Activated T-helper 1 cell treated with anti-CD3 and anti-CD28 coated beads, Interleukin-12 subunit alpha, Interleukin-12 subunit beta, Interleukin-2, Interleukin-4 antibody, amounts not matched to agents 30 ng/mL and 10 ng/mL and 1 ng/mL, durations not matched to agents 14 hours and 24 hours and 36 hours (primary cell): ENCODE measurements at regions of chr4 and their contacts with region 1.

Region 1: DNA sequence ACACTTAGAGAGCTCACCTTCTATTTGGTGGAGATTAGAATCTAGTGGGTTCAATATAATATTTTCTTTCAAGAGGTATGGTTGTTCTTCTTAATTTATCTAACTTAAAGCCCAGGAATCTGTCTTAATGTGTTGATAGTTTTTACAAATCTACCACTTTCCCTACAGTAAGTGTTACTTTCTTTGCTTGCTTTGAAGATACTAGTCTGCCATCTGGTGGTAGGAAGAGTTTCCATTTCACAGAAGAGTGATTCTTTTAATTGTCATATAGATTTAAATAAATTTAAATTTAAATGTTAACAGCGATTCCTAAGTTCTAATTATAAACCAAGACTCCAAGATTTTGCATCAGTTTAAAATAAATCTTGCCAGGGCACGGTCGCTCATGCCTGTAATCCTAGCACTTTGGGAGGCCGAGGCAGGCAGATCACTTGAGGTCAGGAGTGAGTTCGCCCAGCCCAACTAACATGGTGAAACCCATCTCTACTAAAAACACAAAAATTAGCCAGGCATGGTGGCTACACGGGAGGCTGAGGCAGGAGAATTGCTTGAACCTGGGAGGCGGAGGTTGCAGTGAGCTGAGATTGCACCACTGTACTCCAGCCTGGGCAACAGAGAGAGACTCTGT is 43.5 kb downstream of the NUDT9 start:
- DNase-seq: no peak
- H3K4me3 Mint-ChIP-seq: no peak overlapping the region
- H3K27ac Mint-ChIP-seq: no peak overlapping the region
- H3K4me1 Mint-ChIP-seq: no peaks in the 10 kb centered on the region
- H3K27me3 Mint-ChIP-seq: no peaks in the 10 kb centered on the region

Region 2: GRCh38 chr4:87235020-87235671 is 230.7 kb before region 1 on chr4:
- intact Hi-C with region 1: loop called (anchors 5 kb)
- DNase-seq: no peak
- H3K4me3 Mint-ChIP-seq: no peak overlapping the region
- H3K27ac Mint-ChIP-seq: no peak overlapping the region
- H3K4me1 Mint-ChIP-seq: peaks cover 7% of the 10 kb centered on the region
- H3K27me3 Mint-ChIP-seq: peaks cover 14% of the 10 kb centered on the region

Region 3: GRCh38 chr4:87353592-87353991 is 112.3 kb before region 1 on chr4:
- intact Hi-C with region 1: loop called (anchors 5 kb)
- DNase-seq: no peak
- H3K4me3 Mint-ChIP-seq: no peak overlapping the region
- H3K27ac Mint-ChIP-seq: no peak overlapping the region
- H3K4me1 Mint-ChIP-seq: peaks cover 6% of the 10 kb centered on the region
- H3K27me3 Mint-ChIP-seq: no peaks in the 10 kb centered on the region

Region 4: DNA sequence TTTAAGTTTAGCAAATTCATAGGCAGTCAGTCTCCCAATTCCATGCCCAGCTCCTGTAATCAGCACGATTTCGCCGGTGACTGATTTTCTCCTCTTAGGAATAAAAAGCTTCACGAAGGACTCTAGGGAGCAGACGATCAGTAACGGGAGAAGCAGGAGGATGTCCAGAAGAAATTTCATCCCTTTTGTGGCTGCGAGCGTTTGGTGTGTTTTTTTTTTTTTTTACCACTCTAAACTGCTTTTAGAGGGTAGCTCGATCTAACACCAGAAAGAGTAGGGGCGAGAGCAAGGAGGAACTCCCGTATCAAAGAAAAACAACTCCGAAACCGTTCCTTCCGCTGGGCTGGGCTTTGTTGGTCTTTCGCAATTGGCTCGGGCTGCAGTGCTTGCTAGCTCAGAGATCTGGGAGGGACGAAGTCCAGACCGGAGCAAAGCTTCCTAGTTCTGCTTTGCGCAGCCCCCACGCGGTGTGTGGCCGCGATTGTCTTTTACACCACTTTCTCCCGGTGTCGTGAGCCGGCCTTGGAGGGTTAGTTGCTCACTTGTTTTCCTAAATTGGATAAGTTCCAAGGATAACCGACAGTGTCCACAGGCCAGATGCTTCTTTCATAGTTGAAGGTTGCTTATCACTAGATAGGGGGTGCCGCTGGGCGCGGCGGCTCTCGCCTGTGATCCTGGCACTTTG is 74.8 kb before region 1 on chr4 and contains the start of gene HSD17B11:
- intact Hi-C with region 1: loop called (anchors 1 kb)
- DNase-seq: peak; percentile 74
- H3K4me3 Mint-ChIP-seq: peak within 1 kb of the TSS; percentile 94
- H3K27ac Mint-ChIP-seq: peak within 1 kb of the TSS; percentile 85
- H3K4me1 Mint-ChIP-seq: peaks cover 44% of the 10 kb centered on the region
- H3K27me3 Mint-ChIP-seq: peaks cover 8% of the 10 kb centered on the region
- total RNA-seq, gene HSD17B11: 12.1 and 12.7 TPM in 2 replicates

Region 5: GRCh38 chr4:87409420-87409939 is 56.4 kb before region 1 on chr4:
- intact Hi-C with region 1: no loop called
- DNase-seq: no peak
- H3K4me3 Mint-ChIP-seq: no peak overlapping the region
- H3K27ac Mint-ChIP-seq: no peak overlapping the region
- H3K4me1 Mint-ChIP-seq: peaks cover 20% of the 10 kb centered on the region
- H3K27me3 Mint-ChIP-seq: peaks cover 7% of the 10 kb centered on the region